Activated T-helper 1 cell treated with anti-CD3 and anti-CD28 coated beads, Interleukin-12 subunit alpha, Interleukin-12 subunit beta, Interleukin-2, Interleukin-4 antibody, amounts not matched to agents 30 ng/mL and 10 ng/mL and 1 ng/mL, durations not matched to agents 14 hours and 24 hours and 36 hours (primary cell): ENCODE measurements at regions of chr12 and their contacts with region 1.

Region 1: GRCh38 chr12:47021298-47021697 is 58.1 kb upstream of the PCED1B start:
- DNase-seq: no peak
- H3K4me3 Mint-ChIP-seq: no peak overlapping the region
- H3K27ac Mint-ChIP-seq: no peak overlapping the region
- H3K4me1 Mint-ChIP-seq: no peaks in the 10 kb centered on the region
- H3K27me3 Mint-ChIP-seq: peaks cover 20% of the 10 kb centered on the region

Region 2: DNA sequence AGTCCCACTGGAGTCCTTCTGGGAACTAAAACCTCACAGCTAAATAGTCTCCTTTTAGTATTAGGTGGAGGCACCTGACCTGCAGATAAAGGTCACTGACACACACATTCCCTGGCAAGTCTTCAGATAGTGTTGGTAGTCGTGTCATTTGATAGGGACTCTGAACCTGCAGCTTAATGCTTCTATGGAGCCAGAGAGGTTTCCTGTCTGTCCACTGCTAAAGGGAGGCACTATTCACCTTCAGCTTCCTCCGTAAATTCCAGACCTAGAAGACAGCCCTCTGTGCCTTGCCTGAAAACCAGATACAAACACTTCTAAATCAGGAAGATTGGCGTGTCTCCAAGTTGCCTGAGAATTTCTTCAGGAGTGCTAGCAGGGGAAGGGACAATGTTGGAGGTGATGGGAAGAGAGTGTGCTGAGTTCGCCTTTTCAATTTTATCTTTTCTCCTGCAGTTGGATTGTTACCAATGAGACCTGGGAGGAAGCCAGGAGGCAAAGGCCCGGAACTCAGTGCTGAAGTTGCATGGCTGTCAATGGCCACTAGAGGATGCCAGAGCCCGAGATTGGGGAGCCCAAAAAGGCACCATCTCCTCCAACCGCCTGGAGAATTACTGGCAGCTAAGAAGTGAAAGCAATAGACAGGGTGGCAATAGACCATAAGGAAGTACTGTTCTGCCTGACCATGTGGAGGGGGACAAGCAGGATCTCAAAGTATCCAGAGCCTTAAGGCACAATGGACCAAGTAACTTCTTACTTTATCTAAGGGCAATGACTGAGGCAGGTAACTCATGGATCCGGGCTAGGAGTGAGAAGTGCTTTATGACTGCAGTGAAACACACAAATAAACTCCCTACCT is 949.3 kb before region 1 on chr12:
- intact Hi-C with region 1: loop called (anchors 1 kb)
- DNase-seq: peak; percentile 42
- H3K4me3 Mint-ChIP-seq: no peak overlapping the region
- H3K27ac Mint-ChIP-seq: no peak overlapping the region
- H3K4me1 Mint-ChIP-seq: peaks cover 11% of the 10 kb centered on the region
- H3K27me3 Mint-ChIP-seq: no peaks in the 10 kb centered on the region

Region 3: GRCh38 chr12:46303039-46303666 is 718.1 kb before region 1 on chr12:
- intact Hi-C with region 1: loop called (anchors 5 kb)
- DNase-seq: no peak
- H3K4me3 Mint-ChIP-seq: no peak overlapping the region
- H3K27ac Mint-ChIP-seq: no peak overlapping the region
- H3K4me1 Mint-ChIP-seq: no peaks in the 10 kb centered on the region
- H3K27me3 Mint-ChIP-seq: peaks cover 14% of the 10 kb centered on the region

Region 4: DNA sequence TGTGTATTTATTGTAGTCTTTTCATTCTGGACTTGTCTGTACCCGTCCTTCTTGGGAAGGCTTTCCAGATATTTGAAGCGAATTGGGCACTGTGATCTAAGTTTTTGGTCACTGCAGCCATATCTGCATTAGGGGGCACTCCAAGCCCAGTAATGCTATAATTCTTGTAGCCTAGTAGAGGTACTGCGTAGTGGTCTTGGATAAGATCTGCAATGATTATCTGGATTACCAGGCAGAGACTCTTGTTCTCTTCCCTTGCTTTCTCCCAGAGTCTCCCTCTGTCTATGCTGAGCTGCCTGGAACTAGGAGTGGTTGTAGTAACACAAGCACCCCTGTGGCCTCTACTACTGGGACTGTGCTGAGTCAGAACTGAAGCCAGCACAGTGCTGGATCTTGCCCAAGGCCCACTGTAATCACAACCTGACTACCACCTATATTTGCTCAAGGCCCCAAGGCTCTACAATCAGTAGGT is 678.7 kb before region 1 on chr12:
- intact Hi-C with region 1: loop called (anchors 1 kb)
- DNase-seq: no peak
- H3K4me3 Mint-ChIP-seq: no peak overlapping the region
- H3K27ac Mint-ChIP-seq: no peak overlapping the region
- H3K4me1 Mint-ChIP-seq: no peaks in the 10 kb centered on the region
- H3K27me3 Mint-ChIP-seq: peaks cover 9% of the 10 kb centered on the region

Region 5: GRCh38 chr12:46675736-46676135 is 345.6 kb before region 1 on chr12:
- intact Hi-C with region 1: loop called (anchors 1 kb)
- DNase-seq: no peak
- H3K4me3 Mint-ChIP-seq: no peak overlapping the region
- H3K27ac Mint-ChIP-seq: no peak overlapping the region
- H3K4me1 Mint-ChIP-seq: peaks cover 7% of the 10 kb centered on the region
- H3K27me3 Mint-ChIP-seq: peaks cover 3% of the 10 kb centered on the region